ENCODE measurements at regions of chr10 and their contacts with region 1.

Region 1: DNA sequence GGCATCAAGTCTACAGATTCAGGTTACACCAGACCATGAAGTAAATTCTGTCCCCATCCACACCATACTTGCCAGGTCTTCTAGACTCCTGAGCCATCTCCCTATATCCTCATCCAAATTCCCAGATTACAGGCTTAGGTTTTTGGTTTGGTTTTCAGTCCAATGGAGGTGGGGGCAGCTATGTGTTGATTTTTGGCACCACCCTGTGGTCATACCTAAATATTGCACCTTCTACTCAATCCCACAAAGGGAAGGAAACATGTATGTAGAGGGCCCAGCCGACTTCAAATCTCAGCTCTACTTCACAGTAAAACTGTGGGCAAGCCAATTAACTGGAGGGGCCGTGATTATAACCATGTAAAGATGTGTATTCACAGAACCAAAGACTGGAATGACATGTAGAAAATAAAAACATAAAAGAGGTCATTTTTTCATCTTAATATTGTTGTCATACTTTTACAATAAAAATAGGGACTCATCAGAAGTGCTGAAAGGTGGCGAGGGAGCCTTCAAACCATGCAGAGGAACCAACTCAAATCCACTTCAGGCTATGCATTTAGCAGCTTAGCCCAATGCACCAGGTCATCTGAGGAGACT is 19.8 kb downstream of the ERCC6 start:
- DNase-seq: no peak
- ATAC-seq: peak; percentile 67 to 73
- H3K4me3 ChIP-seq: no peak overlapping the region
- H3K27ac ChIP-seq: no peak overlapping the region
- H3K4me1 ChIP-seq: no peaks in the 10 kb centered on the region
- H3K27me3 ChIP-seq: no peaks in the 10 kb centered on the region

Region 2: GRCh38 chr10:48981310-48981907 is 537.7 kb before region 1 on chr10:
- intact Hi-C with region 1: loop called in 3 of 4 experiments (anchors 10 kb)
- DNase-seq: peak; percentile 61 to 83 (median 81)
- ATAC-seq: peak; percentile 75 to 88
- H3K4me3 ChIP-seq: no peak overlapping the region
- H3K27ac ChIP-seq: no peak overlapping the region
- H3K4me1 ChIP-seq: no peaks in the 10 kb centered on the region
- H3K27me3 ChIP-seq: no peaks in the 10 kb centered on the region

Region 3: DNA sequence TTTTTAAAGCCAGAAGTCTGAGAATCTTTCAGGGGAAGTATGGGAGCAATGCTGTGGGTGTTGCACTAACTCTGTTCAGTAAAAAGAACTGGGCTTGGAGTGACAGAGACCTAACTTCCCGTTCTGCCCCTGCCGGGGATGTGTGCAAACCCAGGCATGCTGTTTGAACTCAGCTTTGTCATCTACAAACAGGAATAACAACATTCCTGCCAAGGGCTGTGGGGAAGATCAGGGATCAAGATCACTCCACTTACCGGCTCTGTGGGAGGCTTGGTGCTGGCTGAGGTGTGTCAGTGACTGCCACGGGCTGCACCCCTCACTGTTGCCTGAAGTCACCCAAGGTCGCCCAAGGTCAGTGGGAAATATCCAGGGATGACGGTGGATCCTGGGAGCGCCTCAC is 100.1 kb before region 1 on chr10:
- intact Hi-C with region 1: loop called in 1 of 4 experiments (anchors 10 kb)
- DNase-seq: no peak
- ATAC-seq: no peak
- H3K4me3 ChIP-seq: no peak overlapping the region
- H3K27ac ChIP-seq: no peak overlapping the region
- H3K4me1 ChIP-seq: no peaks in the 10 kb centered on the region
- H3K27me3 ChIP-seq: no peaks in the 10 kb centered on the region

Region 4: GRCh38 chr10:49579621-49580020 is 60.5 kb after region 1 on chr10:
- intact Hi-C with region 1: no loop called
- DNase-seq: no peak
- ATAC-seq: no peak
- H3K4me3 ChIP-seq: no peak overlapping the region
- H3K27ac ChIP-seq: no peak overlapping the region
- H3K4me1 ChIP-seq: no peaks in the 10 kb centered on the region
- H3K27me3 ChIP-seq: no peaks in the 10 kb centered on the region

Measured in right cardiac atrium (tissue), 5 donors.